ENCODE measurements at regions of chr15 and their contacts with region 1.

Region 1: DNA sequence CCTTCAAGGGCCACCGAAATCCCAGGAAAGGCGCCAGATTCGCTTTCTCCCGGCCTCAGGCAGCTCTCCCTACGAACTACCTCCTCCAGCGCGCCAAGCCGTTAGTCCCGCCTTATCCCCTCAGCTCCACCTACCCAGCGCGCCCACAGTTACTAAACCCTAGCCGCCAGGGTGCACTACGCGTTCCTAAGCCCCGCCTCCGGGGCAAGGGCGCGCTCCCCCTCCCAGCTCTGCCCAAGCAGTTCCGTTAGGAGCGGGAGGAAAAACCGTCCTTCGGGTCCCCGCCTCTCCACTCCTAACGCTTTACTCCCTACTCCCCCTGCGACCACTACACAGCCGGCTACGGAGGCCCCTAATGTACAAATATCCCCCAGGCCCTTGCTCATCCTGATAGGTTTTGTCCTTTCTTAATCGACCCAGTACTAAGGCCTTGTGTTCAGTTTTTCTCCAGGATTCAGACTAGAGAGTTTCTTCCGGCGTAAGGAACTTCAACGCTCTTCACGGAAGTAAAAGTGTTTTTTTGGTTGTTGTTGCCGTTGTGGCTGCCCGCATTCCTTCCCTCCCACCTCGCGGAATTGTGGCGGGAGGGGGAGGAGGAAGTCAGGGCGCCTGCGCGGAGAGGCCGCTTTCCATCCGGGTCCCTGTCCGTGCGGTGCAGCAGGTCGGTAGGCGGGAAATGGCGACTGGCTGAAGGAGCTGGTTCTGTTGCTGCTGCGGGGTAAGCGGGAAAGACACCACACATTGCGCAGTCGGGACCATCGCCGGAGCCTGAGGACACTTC is at the start of gene CTDSPL2:
- DNase-seq: peak; percentile 93 to 96
- ATAC-seq: peak; percentile 94 to 99 (median 95)
- H3K4me3 ChIP-seq: peak within 1 kb of the TSS; percentile 82
- H3K4me3 Mint-ChIP-seq: peak within 1 kb of the TSS; percentile 99
- H3K27ac ChIP-seq: peak within 1 kb of the TSS; percentile 93
- H3K27ac Mint-ChIP-seq: peak within 1 kb of the TSS; percentile 97 to 100
- H3K4me1 ChIP-seq: peaks cover 11% of the 10 kb centered on the region
- H3K4me1 Mint-ChIP-seq: peaks cover 54 to 56% of the 10 kb centered on the region in 2 donors
- H3K27me3 ChIP-seq: no peaks in the 10 kb centered on the region
- H3K27me3 Mint-ChIP-seq: no peaks in the 10 kb centered on the region
- CTCF ChIP-seq: no peak
- total RNA-seq, gene CTDSPL2: 89.5 to 108 (median 96.5) TPM

Region 2: DNA sequence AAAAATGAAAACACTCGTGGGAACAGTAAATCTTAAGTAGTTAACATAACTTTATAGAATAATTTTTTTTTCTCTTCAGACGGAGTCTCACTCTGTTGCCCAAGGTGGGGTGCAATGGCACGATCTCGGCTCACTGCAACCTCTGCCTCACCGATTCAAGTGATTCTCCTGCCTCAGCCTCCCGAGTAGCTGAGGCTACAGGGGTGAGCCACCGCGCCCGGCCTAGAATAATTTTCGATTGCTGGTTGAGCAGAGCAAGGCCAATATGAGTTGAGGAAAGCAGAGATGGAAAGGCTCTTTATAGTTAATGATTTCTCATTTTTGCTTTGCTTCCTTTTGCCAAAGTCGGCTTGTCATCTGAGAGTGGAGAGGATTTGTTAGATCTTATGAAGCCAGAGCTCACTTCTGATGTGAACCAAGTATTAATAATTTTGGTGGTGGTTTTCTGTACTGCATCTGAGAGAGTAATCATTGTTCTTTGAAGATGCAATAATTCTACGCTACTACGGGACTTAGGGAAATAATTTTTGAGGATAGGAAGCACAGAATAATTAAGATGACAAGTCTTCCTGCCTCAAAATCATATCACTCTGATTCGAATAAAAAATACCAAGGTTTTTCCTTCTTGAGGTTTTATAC is 140.2 kb before region 1 on chr15:
- intact Hi-C with region 1: loop called (anchors 1 kb)
- DNase-seq: peak in 1 of 2 donors; percentile 28
- ATAC-seq: no peak
- H3K4me3 ChIP-seq: peak overlapping the region; percentile 94
- H3K4me3 Mint-ChIP-seq: peak overlapping the region; percentile 97
- H3K27ac ChIP-seq: peak overlapping the region; percentile 96
- H3K27ac Mint-ChIP-seq: peak overlapping the region; percentile 98 to 100
- H3K4me1 ChIP-seq: peaks cover 13% of the 10 kb centered on the region
- H3K4me1 Mint-ChIP-seq: peaks cover 44 to 45% of the 10 kb centered on the region in 2 donors
- H3K27me3 ChIP-seq: no peaks in the 10 kb centered on the region
- H3K27me3 Mint-ChIP-seq: peaks cover 5 to 22% of the 10 kb centered on the region in 2 donors
- CTCF ChIP-seq: peak; percentile 14

Measured in natural killer cell (primary cell).